IMR-90 (cell line): ENCODE measurements at regions of chr6 and their contacts with region 1.

Region 1: DNA sequence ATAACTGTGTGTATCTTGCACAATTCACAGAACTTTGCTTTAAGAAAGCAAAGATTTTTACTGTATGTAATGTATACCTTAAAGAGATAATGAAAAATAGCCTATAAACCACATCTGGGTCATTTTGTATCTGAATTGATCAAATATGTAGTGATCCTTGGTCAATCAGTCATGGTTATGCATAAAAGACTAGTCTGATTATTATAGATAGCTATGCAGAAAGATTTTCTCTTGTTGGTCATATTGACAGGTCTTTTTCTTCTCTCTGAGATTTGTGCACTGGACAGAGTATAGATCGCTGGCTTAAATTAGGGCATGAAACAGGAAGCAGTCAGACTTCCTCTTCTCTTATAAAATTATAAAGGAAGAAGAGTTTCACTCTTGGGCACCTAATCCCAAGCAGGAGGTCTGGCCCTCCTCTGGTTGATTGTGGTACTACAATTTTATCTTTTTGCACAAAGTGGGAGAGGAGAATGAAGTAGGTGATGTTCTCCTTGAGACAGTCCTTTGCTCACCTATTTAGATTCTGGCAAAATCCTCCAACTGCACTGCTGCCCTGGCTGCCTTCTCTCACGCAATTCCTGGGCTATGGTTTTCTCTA is 380.9 kb upstream of the RGS17 start:
- DNase-seq: peak; percentile 3
- ATAC-seq: peak; percentile 82; the same call in 1 of the 2 replicates
- H3K4me3 ChIP-seq: no peak overlapping the region
- H3K27ac ChIP-seq: no peak overlapping the region
- H3K4me1 ChIP-seq: no peaks in the 10 kb centered on the region
- H3K27me3 ChIP-seq: no peaks in the 10 kb centered on the region
- CTCF ChIP-seq: peak; percentile 57
- POLR2A ChIP-seq: no peak
- RAD21 ChIP-seq: peak; percentile 53

Region 2: DNA sequence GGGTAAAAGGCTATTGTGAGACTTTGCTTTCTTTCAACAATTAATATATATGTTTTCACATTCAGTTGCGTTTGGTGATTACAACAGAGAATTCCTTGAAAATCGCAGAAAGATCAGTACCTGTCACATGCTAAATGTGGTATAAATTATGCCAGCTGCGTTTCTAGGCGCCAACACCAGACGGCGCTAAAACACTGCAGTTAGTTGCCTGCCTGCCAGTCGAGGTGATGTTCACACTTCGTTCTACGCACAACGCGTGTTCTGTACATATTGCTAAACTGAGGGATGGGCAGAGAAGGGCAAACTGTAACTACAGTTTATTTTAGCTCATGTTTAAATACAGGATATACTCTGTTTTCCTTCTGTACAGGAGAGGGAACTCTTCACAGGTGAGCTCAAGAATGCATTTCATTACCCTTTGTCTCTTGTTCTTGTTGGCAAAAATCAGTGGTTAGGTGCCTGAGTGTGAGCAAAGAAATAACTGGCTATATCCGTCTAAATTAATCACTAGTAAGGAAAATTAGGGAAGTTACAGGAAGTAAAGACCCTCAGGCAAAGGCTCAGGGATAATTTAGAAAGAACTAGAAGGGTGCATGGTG is 280.8 kb before region 1 on chr6:
- CTCF ChIA-PET with region 1: interaction called, 3 read pairs
- POLR2A ChIA-PET with region 1: no interaction called
- dilution Hi-C with region 1: no loop called
- in situ Hi-C with region 1: no loop called
- intact Hi-C with region 1: loop called (anchors 1 kb)
- DNase-seq: peak; percentile 12
- ATAC-seq: peak; percentile 65
- H3K4me3 ChIP-seq: no peak overlapping the region
- H3K27ac ChIP-seq: no peak overlapping the region
- H3K4me1 ChIP-seq: no peaks in the 10 kb centered on the region
- H3K27me3 ChIP-seq: no peaks in the 10 kb centered on the region
- CTCF ChIP-seq: peak; percentile 60
- POLR2A ChIP-seq: no peak
- RAD21 ChIP-seq: peak; percentile 56

Region 3: GRCh38 chr6:153373869-153374268 is 138.1 kb before region 1 on chr6:
- CTCF ChIA-PET with region 1: no interaction called
- POLR2A ChIA-PET with region 1: no interaction called
- dilution Hi-C with region 1: no loop called
- in situ Hi-C with region 1: no loop called
- intact Hi-C with region 1: no loop called
- DNase-seq: no peak
- ATAC-seq: no peak
- H3K4me3 ChIP-seq: no peak overlapping the region
- H3K27ac ChIP-seq: no peak overlapping the region
- H3K4me1 ChIP-seq: no peaks in the 10 kb centered on the region
- H3K27me3 ChIP-seq: no peaks in the 10 kb centered on the region
- CTCF ChIP-seq: no peak
- POLR2A ChIP-seq: no peak
- RAD21 ChIP-seq: no peak

Region 4: DNA sequence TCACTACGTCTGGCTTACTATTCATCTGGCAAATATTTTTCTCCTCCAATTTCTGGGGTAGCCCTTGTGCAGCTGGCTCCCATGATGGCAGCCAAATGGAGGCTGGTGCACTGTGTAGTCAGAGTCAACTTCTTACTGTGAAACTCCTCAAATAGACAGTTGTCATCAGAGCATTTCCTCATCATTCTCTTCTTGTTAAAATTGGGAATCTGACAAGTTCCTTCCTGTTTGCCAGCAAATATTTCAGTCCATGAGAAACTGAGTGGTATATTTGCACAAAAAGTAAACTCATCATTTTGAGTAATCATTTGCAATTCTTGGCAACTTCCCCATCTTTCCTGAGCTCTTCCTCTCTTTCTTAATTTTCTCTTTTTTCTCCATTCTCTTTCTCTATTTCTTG is 14.0 kb after region 1 on chr6:
- CTCF ChIA-PET with region 1: no interaction called
- POLR2A ChIA-PET with region 1: no interaction called
- dilution Hi-C with region 1: no loop called
- in situ Hi-C with region 1: no loop called
- intact Hi-C with region 1: no loop called
- DNase-seq: no peak
- ATAC-seq: no peak
- H3K4me3 ChIP-seq: no peak overlapping the region
- H3K27ac ChIP-seq: no peak overlapping the region
- H3K4me1 ChIP-seq: no peaks in the 10 kb centered on the region
- H3K27me3 ChIP-seq: no peaks in the 10 kb centered on the region
- CTCF ChIP-seq: no peak
- POLR2A ChIP-seq: no peak
- RAD21 ChIP-seq: no peak

Region 5: DNA sequence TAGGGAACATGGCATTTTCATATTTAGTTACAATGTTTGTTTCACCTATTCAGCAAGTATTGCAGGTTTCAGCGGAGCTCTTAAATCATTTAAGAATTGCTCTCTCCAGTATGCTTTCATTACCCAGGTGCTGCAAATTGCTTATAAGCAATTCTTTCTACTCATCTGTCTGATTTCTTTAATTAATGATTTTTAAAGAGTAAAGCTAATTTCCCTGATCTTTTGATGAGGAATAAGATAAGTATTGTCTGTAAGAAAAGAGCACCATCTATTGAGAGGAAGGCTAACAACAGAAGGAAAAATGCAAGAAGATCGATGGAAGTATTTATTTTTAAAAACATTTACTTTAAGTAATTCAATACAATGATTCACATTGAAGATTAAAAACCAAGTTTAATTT is 529.0 kb after region 1 on chr6:
- CTCF ChIA-PET with region 1: no interaction called
- POLR2A ChIA-PET with region 1: no interaction called
- dilution Hi-C with region 1: no loop called
- in situ Hi-C with region 1: no loop called
- intact Hi-C with region 1: no loop called
- DNase-seq: no peak
- ATAC-seq: no peak
- H3K4me3 ChIP-seq: no peak overlapping the region
- H3K27ac ChIP-seq: no peak overlapping the region
- H3K4me1 ChIP-seq: no peaks in the 10 kb centered on the region
- H3K27me3 ChIP-seq: no peaks in the 10 kb centered on the region
- CTCF ChIP-seq: no peak
- POLR2A ChIP-seq: no peak
- RAD21 ChIP-seq: no peak